ENCODE measurements at regions of chr14 and their contacts with region 1.

Region 1: GRCh38 chr14:50231475-50232275 is at the start of gene SOS2:
- DNase-seq: peak; percentile 83
- H3K4me3 Mint-ChIP-seq: peak within 1 kb of the TSS; percentile 76
- H3K27ac Mint-ChIP-seq: peak within 1 kb of the TSS; percentile 87
- H3K4me1 Mint-ChIP-seq: peaks cover 33% of the 10 kb centered on the region
- H3K27me3 Mint-ChIP-seq: no peaks in the 10 kb centered on the region
- total RNA-seq, gene SOS2: 20.3 to 22.1 TPM

Region 2: GRCh38 chr14:48954446-48954845 is 1277.2 kb before region 1 on chr14:
- CTCF ChIA-PET with region 1: no interaction called
- intact Hi-C with region 1: no loop called
- DNase-seq: no peak
- H3K4me3 Mint-ChIP-seq: no peak overlapping the region
- H3K27ac Mint-ChIP-seq: no peak overlapping the region
- H3K4me1 Mint-ChIP-seq: no peaks in the 10 kb centered on the region
- H3K27me3 Mint-ChIP-seq: no peaks in the 10 kb centered on the region

Region 3: GRCh38 chr14:49620182-49621113 is 611.2 kb before region 1 on chr14 and contains the starts of genes MGAT2 and RPL36AL:
- CTCF ChIA-PET with region 1: no interaction called
- intact Hi-C with region 1: loop called (anchors 1 kb)
- DNase-seq: peak; percentile 97
- H3K4me3 Mint-ChIP-seq: peak within 1 kb of the TSS; percentile 97
- H3K27ac Mint-ChIP-seq: peak within 1 kb of the TSS; percentile 97
- H3K4me1 Mint-ChIP-seq: peaks cover 52% of the 10 kb centered on the region
- H3K27me3 Mint-ChIP-seq: no peaks in the 10 kb centered on the region
- total RNA-seq, gene MGAT2: 20.6 to 20.7 TPM
- total RNA-seq, gene RPL36AL: 250 to 266 TPM

Region 4: DNA sequence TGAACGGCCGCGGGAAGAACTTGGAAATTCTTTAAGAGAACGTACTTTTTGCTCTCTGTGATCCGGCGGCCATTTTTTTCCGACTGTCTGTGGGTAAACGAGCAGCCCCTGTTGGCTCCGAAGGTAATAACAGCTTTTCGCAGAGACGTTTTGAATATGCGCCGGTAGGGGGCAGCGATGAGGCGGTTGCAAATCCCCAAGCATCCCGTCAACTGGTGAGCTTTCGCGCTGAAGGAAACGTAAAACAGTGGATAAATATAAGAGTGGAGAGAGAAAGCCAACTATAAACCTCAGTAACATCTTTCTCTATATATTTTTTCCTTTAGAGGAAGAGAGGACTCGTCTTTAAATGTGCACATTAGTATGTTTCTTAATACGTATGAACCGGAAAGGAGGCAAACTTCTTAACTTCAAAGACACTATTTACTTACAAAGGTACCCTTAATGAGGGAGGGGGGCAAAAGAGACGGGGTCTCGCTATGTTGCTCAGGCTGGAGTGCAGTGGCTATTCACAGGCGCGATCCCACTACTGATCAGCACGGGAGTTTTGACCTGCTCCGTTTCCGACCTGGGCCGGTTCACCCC is 369.5 kb before region 1 on chr14:
- CTCF ChIA-PET with region 1: interaction called, 3 read pairs
- intact Hi-C with region 1: loop called (anchors 1 kb)
- DNase-seq: peak; percentile 91
- H3K4me3 Mint-ChIP-seq: no peak overlapping the region
- H3K27ac Mint-ChIP-seq: no peak overlapping the region
- H3K4me1 Mint-ChIP-seq: peaks cover 14% of the 10 kb centered on the region
- H3K27me3 Mint-ChIP-seq: peaks cover 2% of the 10 kb centered on the region

Region 5: GRCh38 chr14:50085570-50086320 is 145.9 kb before region 1 on chr14:
- CTCF ChIA-PET with region 1: no interaction called
- intact Hi-C with region 1: loop called (anchors 1 kb)
- DNase-seq: peak; percentile 77
- H3K4me3 Mint-ChIP-seq: peak overlapping the region; percentile 6
- H3K27ac Mint-ChIP-seq: peak overlapping the region; percentile 83
- H3K4me1 Mint-ChIP-seq: peaks cover 93% of the 10 kb centered on the region
- H3K27me3 Mint-ChIP-seq: no peaks in the 10 kb centered on the region

Region 6: DNA sequence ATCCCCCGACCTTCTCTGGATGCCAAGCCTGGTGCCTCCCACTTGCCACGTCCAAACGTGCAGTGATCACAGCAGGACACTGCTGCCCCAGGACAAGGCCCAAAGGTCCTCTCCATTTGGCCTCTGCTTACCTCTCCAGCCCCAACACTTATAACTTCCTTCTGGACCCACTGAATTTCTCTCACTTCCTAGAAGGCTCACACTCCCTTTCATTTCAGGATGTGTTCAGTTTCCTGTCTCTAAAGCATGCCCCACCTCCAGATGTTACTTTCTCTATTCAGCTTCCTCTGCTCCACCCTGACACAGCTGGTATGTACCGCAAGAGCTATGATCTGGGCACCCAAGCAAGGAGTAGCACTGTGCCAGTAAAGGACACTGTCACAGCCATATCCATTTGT is 132.0 kb after region 1 on chr14:
- CTCF ChIA-PET with region 1: no interaction called
- intact Hi-C with region 1: loop called (anchors 1 kb)
- DNase-seq: peak; percentile 74
- H3K4me3 Mint-ChIP-seq: peak overlapping the region; percentile 73
- H3K27ac Mint-ChIP-seq: peak overlapping the region; percentile 84
- H3K4me1 Mint-ChIP-seq: peaks cover 18% of the 10 kb centered on the region
- H3K27me3 Mint-ChIP-seq: no peaks in the 10 kb centered on the region

Region 7: DNA sequence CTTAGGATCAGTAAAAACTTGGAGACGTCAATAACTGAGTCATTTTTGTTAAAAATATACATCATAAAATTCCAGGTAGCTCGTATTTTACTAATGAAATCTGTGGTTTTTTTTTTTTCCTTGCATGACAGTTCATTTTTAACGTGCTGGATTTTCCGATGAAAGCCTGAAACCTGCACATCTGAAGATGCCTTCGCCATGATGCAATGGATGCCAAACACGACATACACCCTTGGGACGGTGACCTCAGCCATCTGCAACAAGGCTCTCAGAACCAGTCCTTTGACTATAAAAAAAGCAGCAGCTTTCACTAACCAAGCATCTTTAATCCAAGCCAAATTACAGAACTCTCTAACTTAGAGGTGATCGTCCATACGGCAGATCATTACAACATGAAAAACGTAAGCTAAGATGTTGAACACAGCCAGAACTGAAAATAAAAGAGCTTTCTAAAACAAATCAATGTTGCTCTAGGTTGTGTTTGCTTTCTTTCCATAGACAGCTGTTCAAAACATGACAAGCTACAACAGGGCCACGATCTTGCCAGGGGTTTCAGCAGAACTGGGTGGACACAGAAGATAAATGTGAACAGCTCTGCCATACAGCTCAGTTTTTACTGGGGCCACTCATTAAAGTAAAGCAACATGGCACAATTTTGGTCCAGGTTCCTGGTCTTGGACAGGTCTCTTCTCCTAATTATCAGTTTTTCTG is 591.5 kb after region 1 on chr14:
- CTCF ChIA-PET with region 1: no interaction called
- intact Hi-C with region 1: loop called (anchors 5 kb)
- DNase-seq: peak; percentile 30
- H3K4me3 Mint-ChIP-seq: peak overlapping the region; percentile 59
- H3K27ac Mint-ChIP-seq: peak overlapping the region; percentile 73
- H3K4me1 Mint-ChIP-seq: peaks cover 89% of the 10 kb centered on the region
- H3K27me3 Mint-ChIP-seq: no peaks in the 10 kb centered on the region